Prostate gland (tissue), 2 donors: ENCODE measurements at regions of chr5 and their contacts with region 1.

Region 1: DNA sequence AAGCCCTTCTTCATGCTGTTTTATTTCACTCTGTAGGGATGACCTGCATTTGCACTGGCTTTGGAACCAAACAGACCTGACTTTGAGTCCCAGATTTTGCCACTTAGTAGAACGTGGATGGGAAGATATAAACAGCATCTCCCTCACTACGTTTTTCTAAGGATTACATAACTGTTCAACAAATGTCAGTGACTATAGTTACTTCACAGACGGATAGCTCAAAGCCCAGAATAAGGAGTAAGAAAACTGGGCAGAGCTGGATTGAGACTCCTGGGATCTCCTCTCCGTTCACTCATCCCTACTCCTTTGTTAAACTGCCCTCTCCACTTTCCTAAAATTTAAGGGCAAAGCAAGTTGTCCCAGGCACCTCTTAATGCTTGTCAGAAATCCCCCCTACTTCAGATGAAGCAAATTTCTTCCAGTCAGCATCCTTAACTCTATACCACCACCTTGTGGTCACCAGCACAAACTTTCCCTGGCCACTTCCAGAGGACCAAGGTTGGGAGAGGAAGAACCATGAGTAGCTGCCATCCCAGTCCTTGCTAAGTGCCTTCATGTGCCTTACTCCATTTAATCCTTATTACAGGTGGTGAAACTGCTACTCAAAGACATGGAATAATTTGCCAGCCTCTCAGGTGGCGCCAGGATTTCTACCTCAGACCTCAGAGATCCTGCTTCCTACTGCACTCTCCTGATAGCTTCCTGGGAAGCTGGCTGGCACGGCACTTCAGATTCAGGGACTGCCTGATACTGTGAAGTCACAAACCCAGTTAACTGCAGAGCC is 38.4 kb downstream of the EGR1 start:
- DNase-seq: peak; percentile 56
- H3K4me3 ChIP-seq: no peak overlapping the region
- H3K27ac ChIP-seq: peak overlapping the region; percentile 67 to 70
- H3K4me1 ChIP-seq: peaks cover 14% of the 10 kb centered on the region
- H3K27me3 ChIP-seq: no peaks in the 10 kb centered on the region
- CTCF ChIP-seq: peak; percentile 51 to 92 (median 82)
- POLR2A ChIP-seq: no peak

Region 2: GRCh38 chr5:138226910-138227309 is 276.8 kb before region 1 on chr5:
- intact Hi-C with region 1: loop called (anchors 10 kb)
- DNase-seq: no peak
- H3K4me3 ChIP-seq: no peak overlapping the region
- H3K27ac ChIP-seq: no peak overlapping the region
- H3K4me1 ChIP-seq: no peaks in the 10 kb centered on the region
- H3K27me3 ChIP-seq: no peaks in the 10 kb centered on the region
- CTCF ChIP-seq: no peak
- POLR2A ChIP-seq: no peak

Region 3: DNA sequence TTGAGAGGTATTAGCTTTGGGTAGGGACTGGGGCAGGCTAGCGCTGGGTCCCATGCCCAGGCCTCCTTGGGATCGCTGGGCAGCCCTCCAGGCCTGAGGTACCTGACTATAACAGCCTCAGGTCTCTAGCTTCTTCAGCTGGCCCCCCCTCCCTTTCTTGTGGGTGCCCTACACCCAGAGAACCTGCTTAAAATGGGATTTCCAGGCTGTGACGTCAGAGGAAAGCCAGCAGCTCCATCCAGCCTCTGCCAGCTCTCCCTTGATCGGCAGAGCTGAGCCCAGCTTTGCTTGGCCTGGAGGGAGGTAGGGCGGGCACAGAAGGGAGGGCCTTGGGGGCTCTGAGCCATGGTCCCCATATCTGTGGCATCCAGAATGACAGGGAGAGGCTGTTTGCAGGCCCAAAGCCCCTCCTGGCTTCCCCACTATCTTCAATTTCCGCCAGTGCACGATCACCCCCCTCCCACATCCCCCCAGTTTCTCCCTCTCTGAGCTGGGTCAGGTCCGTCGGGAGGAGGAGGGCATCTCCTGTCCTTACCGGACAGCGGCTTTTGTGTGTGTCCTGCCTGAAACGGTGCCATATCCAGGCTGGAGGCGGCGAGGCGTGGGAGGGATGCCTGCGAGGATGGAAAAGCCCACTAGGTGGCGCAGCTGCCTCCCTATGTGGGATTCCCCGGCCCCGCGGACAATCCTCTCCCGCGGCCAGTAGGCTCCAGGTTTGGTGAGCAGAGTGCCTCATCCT is 54.0 kb before region 1 on chr5:
- intact Hi-C with region 1: loop called (anchors 1 kb)
- DNase-seq: peak; percentile 87
- H3K4me3 ChIP-seq: no peak overlapping the region
- H3K27ac ChIP-seq: peak overlapping the region in 1 of 2 donors; percentile 26
- H3K4me1 ChIP-seq: peaks cover 5% of the 10 kb centered on the region
- H3K27me3 ChIP-seq: no peaks in the 10 kb centered on the region
- CTCF ChIP-seq: peak; percentile 86 to 98 (median 94)
- POLR2A ChIP-seq: no peak

Region 4: GRCh38 chr5:138464008-138464387 is 39.7 kb before region 1 on chr5:
- intact Hi-C with region 1: loop called (anchors 1 kb)
- DNase-seq: peak; percentile 94
- H3K4me3 ChIP-seq: peak overlapping the region; percentile 69 to 97
- H3K27ac ChIP-seq: peak overlapping the region; percentile 99
- H3K4me1 ChIP-seq: peaks cover 3% of the 10 kb centered on the region
- H3K27me3 ChIP-seq: no peaks in the 10 kb centered on the region
- CTCF ChIP-seq: peak; percentile 76 to 98 (median 98)
- POLR2A ChIP-seq: peak; percentile 72